Panc1 (cell line): ENCODE measurements at regions of chr2 and their contacts with region 1.

Region 1: GRCh38 chr2:227655454-227655853 is 11.2 kb upstream of the SCYGR5 start:
- DNase-seq: peak; percentile 32
- ATAC-seq: no peak
- H3K4me3 ChIP-seq: no peak overlapping the region
- H3K27ac ChIP-seq: no peak overlapping the region
- H3K4me1 ChIP-seq: no peaks in the 10 kb centered on the region
- H3K27me3 ChIP-seq: no peaks in the 10 kb centered on the region
- CTCF ChIP-seq: no peak

Region 2: DNA sequence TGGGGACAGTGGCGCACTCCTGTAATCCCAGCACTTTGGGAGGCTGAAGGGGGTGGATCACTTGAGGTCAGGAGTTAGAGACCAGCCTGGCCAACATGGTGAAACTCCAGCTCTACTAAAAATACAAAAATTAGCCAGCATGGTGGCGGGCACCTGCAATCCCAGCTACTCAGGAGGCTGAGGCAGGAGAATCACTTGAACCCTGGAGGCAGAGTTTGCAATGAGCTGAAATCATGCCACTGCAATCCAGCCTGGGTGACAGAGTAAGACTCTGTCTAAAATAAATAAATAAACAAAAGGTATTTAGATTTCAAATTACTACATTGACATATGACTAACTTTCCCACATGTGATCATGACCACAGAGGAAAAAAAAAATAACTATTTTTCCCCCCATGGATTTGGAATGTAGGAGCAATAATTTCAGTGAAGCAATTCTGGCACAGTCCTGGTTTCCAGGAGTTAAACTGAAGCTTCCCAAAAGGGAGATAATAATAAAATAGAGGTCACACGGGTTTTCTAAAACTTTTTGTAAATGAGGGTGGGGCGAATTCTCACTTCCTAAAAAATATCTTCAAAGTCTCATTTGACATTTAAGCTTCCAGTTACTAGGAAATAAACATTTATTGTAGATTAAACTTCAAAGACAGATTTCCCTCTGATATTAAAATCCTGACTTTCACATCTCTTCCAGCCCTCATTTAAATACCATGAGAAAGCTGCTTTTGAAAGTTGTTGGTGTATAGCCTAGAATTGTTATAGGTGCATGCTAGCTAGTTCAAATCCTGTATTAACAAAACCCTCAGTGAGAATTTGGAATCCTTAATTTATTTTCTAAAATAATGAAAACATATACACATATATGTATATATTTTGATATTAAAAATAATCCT is 41.6 kb after region 1 on chr2:
- CTCF ChIA-PET with region 1: no interaction called
- POLR2A ChIA-PET with region 1: no interaction called
- in situ Hi-C with region 1: no loop called
- intact Hi-C with region 1: no loop called
- DNase-seq: no peak
- ATAC-seq: no peak
- H3K4me3 ChIP-seq: no peak overlapping the region
- H3K27ac ChIP-seq: no peak overlapping the region
- H3K4me1 ChIP-seq: no peaks in the 10 kb centered on the region
- H3K27me3 ChIP-seq: no peaks in the 10 kb centered on the region
- CTCF ChIP-seq: no peak

Region 3: DNA sequence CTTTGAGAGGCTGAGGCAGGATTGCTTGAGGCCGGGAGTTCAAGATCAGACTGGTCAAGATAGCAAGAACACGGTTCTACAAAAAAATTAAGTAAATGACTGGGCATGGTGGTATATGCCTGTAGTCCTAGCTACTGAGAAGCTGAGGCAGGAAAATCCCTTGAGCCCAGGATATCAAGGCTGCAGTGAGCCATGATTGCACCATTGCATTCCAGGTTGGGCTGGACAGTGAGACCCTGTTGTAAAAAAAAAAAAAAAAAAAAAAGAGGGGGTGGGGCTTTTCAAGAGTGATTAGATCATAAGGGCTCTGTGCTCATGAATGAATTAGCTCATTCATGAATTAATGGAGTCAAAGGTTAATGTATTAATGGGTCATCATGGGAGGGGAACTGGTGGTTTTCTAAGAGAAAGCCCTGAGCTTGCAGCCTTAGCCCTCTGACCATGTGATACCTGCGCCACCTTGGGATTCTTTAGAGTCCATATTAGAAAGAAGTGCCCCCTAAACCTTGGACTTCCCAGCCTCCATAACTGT is 57.8 kb after region 1 on chr2:
- CTCF ChIA-PET with region 1: interaction called, 10 read pairs
- POLR2A ChIA-PET with region 1: no interaction called
- in situ Hi-C with region 1: no loop called
- intact Hi-C with region 1: no loop called
- DNase-seq: no peak
- ATAC-seq: no peak
- H3K4me3 ChIP-seq: no peak overlapping the region
- H3K27ac ChIP-seq: no peak overlapping the region
- H3K4me1 ChIP-seq: no peaks in the 10 kb centered on the region
- H3K27me3 ChIP-seq: no peaks in the 10 kb centered on the region
- CTCF ChIP-seq: no peak

Region 4: GRCh38 chr2:227728035-227728434 is 72.6 kb after region 1 on chr2 and contains the start of gene SCYGR7:
- CTCF ChIA-PET with region 1: no interaction called
- POLR2A ChIA-PET with region 1: no interaction called
- in situ Hi-C with region 1: no loop called
- intact Hi-C with region 1: no loop called
- DNase-seq: no peak
- ATAC-seq: no peak
- H3K4me3 ChIP-seq: no peak within 1 kb of the TSS
- H3K27ac ChIP-seq: no peak within 1 kb of the TSS
- H3K4me1 ChIP-seq: no peaks in the 10 kb centered on the region
- H3K27me3 ChIP-seq: peaks cover 3% of the 10 kb centered on the region; the same call in 1 of the 2 replicates
- CTCF ChIP-seq: no peak
- total RNA-seq, gene SCYGR7: not detected

Region 5: GRCh38 chr2:227766373-227766883 is 111.0 kb after region 1 on chr2:
- CTCF ChIA-PET with region 1: interaction called, 33 read pairs
- POLR2A ChIA-PET with region 1: no interaction called
- in situ Hi-C with region 1: no loop called
- intact Hi-C with region 1: loop called (anchors 1 kb)
- DNase-seq: peak; percentile 53
- ATAC-seq: peak; percentile 99
- H3K4me3 ChIP-seq: no peak overlapping the region
- H3K27ac ChIP-seq: no peak overlapping the region
- H3K4me1 ChIP-seq: no peaks in the 10 kb centered on the region
- H3K27me3 ChIP-seq: no peaks in the 10 kb centered on the region
- CTCF ChIP-seq: peak; percentile 84

Region 6: DNA sequence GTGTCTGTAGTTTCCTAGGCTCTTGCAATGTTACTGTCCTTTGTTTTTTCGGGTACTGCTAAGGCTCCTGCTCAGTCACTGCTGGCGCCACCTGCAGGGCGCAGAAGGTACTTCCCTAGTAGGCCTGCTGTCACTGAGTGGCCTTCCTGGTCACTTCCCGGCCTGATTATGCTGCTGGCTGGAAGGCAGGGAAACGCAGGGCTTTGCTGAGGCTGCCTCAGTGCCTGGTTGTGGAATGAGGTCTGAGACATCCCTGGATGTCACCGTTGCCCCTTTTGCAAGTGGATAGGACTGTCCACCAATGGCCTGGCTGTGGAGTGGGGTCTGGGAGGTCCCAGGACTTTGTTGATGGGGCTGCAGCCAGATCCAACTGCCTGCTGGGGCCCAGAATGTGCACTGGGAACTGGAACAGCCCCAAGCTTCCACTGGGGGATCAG is 229.1 kb after region 1 on chr2:
- CTCF ChIA-PET with region 1: no interaction called
- POLR2A ChIA-PET with region 1: no interaction called
- in situ Hi-C with region 1: no loop called
- intact Hi-C with region 1: loop called (anchors 2 kb)
- DNase-seq: no peak
- ATAC-seq: peak; percentile 83
- H3K4me3 ChIP-seq: no peak overlapping the region
- H3K27ac ChIP-seq: no peak overlapping the region
- H3K4me1 ChIP-seq: no peaks in the 10 kb centered on the region
- H3K27me3 ChIP-seq: no peaks in the 10 kb centered on the region
- CTCF ChIP-seq: peak; percentile 79